Ovary (tissue), 10 donors: ENCODE measurements at regions of chr16 and their contacts with region 1.

Region 1: GRCh38 chr16:57300387-57301125 is 16.1 kb upstream of the PLLP start:
- DNase-seq: peak; percentile 98 to 99 (median 99)
- H3K4me3 ChIP-seq: peak overlapping the region; percentile 41
- H3K27ac ChIP-seq: peak overlapping the region; percentile 54 to 84
- H3K4me1 ChIP-seq: no peaks in the 10 kb centered on the region
- H3K27me3 ChIP-seq: no peaks in the 10 kb centered on the region
- CTCF ChIP-seq: peak; percentile 94 to 98 (median 98)
- EP300 ChIP-seq: no peak
- POLR2A ChIP-seq: no peak

Region 2: DNA sequence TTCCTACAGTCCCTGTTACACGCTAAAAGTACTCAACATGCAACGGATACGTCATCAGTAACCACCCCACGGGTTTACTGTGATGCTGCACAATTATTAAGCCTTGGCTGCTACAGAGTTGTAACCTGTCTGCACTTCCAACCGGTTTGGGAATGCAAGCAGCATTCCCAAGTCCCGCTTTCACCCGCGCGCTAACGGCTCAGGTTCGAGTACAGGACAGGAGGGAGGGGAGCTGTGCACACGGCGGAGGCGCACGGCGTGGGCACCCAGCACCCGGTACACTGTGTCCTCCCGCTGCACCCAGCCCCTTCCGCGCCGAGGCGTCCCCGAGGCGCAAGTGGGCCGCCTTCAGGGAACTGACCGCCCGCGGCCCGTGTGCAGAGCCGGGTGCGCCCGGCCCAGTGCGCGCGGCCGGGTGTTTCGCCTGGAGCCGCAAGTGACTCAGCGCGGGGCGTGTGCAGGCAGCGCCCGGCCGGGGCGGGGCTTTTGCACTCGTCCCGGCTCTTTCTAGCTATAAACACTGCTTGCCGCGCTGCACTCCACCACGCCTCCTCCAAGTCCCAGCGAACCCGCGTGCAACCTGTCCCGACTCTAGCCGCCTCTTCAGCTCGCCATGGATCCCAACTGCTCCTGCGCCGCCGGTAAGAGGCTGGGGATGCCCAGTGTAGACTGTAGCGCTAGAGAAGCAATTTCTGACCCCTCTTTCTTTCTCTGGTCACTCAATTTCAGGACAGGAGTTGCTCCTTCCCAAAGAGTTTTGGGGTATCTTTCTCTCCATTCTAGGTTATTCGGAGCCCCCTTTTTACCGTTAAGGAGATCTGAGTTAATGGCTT is 692.3 kb before region 1 on chr16 and contains the start of gene MT2A:
- intact Hi-C with region 1: loop called in 1 of 4 experiments (anchors 10 kb)
- DNase-seq: peak; percentile 90 to 94 (median 90)
- H3K4me3 ChIP-seq: peak within 1 kb of the TSS; percentile 76
- H3K27ac ChIP-seq: peak within 1 kb of the TSS; percentile 79 to 81
- H3K4me1 ChIP-seq: peaks cover 27% of the 10 kb centered on the region
- H3K27me3 ChIP-seq: no peaks in the 10 kb centered on the region
- CTCF ChIP-seq: peak in 1 of 3 donors; percentile 10
- EP300 ChIP-seq: peak; percentile 86
- POLR2A ChIP-seq: peak; percentile 90
- total RNA-seq, gene MT2A: 88.0 to 679 (median 136) TPM

Region 3: GRCh38 chr16:57244767-57245471 is 55.6 kb before region 1 on chr16 and contains the start of gene ARL2BP:
- intact Hi-C with region 1: loop called in 1 of 4 experiments (anchors 2 kb)
- DNase-seq: peak; percentile 97 to 99 (median 98)
- H3K4me3 ChIP-seq: peak within 1 kb of the TSS; percentile 84
- H3K27ac ChIP-seq: peak within 1 kb of the TSS; percentile 22 to 80
- H3K4me1 ChIP-seq: peaks cover 3% of the 10 kb centered on the region
- H3K27me3 ChIP-seq: no peaks in the 10 kb centered on the region
- CTCF ChIP-seq: no peak
- EP300 ChIP-seq: no peak
- POLR2A ChIP-seq: peak; percentile 64
- total RNA-seq, gene ARL2BP: 50.0 to 74.3 (median 57.7) TPM

Region 4: GRCh38 chr16:57413301-57413730 is 112.8 kb after region 1 on chr16:
- intact Hi-C with region 1: loop called (anchors 2 kb)
- DNase-seq: no peak
- H3K4me3 ChIP-seq: no peak overlapping the region
- H3K27ac ChIP-seq: no peak overlapping the region
- H3K4me1 ChIP-seq: peaks cover 1% of the 10 kb centered on the region
- H3K27me3 ChIP-seq: no peaks in the 10 kb centered on the region
- CTCF ChIP-seq: no peak
- EP300 ChIP-seq: no peak
- POLR2A ChIP-seq: no peak

Region 5: DNA sequence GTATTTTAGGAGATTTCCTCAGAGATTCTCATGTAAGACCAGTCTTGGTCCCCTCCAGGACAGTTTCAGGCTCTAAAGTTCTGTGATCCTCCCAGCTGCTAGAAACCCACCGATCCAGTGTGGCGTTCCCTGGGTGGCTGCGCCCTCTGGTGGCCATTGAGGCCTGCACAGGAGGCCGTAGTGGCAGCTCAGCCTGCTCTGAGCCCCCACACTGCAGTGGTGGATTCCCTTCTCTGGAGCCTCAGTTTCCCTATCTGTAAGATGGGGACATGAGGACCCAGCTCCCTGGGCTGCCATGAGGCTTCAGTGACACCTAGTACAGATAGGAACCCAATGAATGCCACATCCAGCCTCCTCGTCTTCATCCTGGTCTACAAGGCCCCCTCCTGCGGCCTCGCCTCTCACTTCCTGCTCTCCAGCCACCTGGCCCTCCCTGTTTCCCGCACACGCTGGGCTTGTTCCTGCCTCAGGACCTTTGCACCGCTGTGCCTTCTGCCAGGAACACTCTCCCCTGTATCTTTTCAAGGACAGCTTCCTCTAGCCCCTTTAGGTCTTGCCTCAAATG is 219.3 kb after region 1 on chr16:
- intact Hi-C with region 1: loop called in 3 of 4 experiments (anchors 5 to 10 kb)
- DNase-seq: peak; percentile 75 to 89 (median 85)
- H3K4me3 ChIP-seq: no peak overlapping the region
- H3K27ac ChIP-seq: no peak overlapping the region
- H3K4me1 ChIP-seq: no peaks in the 10 kb centered on the region
- H3K27me3 ChIP-seq: no peaks in the 10 kb centered on the region
- CTCF ChIP-seq: peak; percentile 80 to 96 (median 83)
- EP300 ChIP-seq: no peak
- POLR2A ChIP-seq: no peak

Region 6: DNA sequence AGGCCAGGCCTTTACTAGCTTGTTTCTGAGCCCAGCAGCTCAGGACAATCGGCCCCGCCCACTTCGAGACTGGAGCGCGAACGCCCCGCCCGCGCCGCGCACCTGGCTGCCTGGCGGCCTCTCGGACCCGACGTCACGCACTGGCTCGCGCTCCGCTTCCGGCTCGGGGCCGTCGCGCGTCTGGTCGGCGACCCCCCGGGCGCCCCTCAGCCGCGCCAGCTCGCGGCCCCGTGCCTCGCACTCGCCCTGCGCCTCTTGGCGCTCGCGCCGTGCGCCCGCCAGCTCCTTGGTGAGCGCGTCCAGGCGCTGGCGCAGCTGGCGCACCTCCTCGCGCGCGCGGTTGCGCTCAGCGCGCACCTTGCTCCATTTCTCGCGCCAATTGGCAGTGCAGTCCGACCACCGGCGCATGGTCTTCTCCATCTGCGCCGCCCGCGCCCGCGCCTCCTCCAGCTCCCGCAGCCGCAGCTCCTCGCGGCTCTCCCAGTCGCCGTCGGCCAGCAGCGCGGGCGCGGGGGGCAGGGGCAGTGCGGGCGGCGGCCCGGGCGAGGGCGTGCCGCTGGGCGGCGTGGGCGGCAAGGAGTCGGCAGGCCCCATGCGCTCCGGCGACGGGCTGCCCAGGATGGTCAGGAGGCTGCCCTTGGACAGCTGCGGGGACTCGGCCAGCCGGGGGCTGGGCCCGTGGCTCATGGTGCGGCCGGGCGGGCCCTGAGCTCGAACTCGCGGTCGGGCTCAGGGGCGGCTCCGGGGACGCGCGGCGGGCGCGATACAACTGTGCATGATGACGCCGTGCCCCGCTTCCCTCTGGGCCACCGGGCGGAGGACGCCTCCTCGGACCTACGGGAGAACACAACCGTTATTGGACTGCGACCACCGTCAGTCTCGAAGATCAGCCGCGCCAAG is 228.2 kb after region 1 on chr16:
- intact Hi-C with region 1: loop called in 1 of 4 experiments (anchors 2 kb)
- DNase-seq: peak in 4 of 5 donors; percentile 7 to 42 (median 20)
- H3K4me3 ChIP-seq: no peak overlapping the region
- H3K27ac ChIP-seq: no peak overlapping the region
- H3K4me1 ChIP-seq: peaks cover 5% of the 10 kb centered on the region
- H3K27me3 ChIP-seq: no peaks in the 10 kb centered on the region
- CTCF ChIP-seq: no peak
- EP300 ChIP-seq: no peak
- POLR2A ChIP-seq: no peak

Region 7: GRCh38 chr16:58912571-58912970 is 1612.0 kb after region 1 on chr16:
- intact Hi-C with region 1: no loop called
- DNase-seq: no peak
- H3K4me3 ChIP-seq: no peak overlapping the region
- H3K27ac ChIP-seq: no peak overlapping the region
- H3K4me1 ChIP-seq: no peaks in the 10 kb centered on the region
- H3K27me3 ChIP-seq: no peaks in the 10 kb centered on the region
- CTCF ChIP-seq: no peak
- EP300 ChIP-seq: no peak
- POLR2A ChIP-seq: no peak